Right ventricle myocardium inferior (tissue), 1 donor: ENCODE measurements at regions of chr11 and their contacts with region 1.

Region 1: GRCh38 chr11:10514210-10514609 is 26.8 kb downstream of the RNF141 start:
- DNase-seq: no peak
- ATAC-seq: no peak

Region 2: DNA sequence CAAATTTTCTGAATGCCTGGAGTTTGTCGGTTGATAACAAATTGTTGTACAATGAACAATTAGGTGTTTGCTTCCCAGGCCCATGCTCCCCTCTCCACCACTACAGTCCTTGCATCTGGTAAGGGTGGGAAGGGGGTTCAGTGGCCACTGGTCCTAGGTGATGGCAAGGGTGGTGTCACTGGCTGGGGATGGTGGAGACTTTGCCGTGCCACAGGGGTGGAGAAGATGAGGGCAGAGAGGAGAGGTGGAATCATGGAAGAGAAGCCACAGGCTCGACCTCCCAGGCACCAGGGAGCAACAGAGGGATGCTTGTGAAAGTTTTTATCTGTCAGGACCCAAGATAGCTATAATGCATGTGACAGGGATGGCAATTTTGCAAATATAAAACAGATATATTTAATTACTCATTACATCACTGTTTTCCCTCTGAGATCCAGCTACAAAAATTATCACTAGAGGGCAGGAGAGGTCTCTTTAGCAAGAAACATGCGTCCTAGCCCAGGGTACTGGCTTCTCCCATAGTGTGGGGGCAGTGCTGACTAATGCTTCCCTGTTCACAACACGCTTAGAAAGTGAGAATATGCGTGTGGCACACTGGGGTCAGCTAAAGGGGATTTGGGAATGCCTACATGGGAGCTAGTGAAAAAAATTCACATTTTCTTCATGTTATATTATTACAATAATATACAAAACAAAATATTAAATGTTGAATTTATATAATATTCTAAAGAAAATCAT is 108.2 kb before region 1 on chr11:
- intact Hi-C with region 1: loop called (anchors 10 kb)
- DNase-seq: no peak
- ATAC-seq: peak; percentile 88

Region 3: GRCh38 chr11:10441652-10442503 is 72.3 kb before region 1 on chr11:
- intact Hi-C with region 1: no loop called
- DNase-seq: no peak
- ATAC-seq: no peak

Region 4: GRCh38 chr11:10606536-10607208 is 92.5 kb after region 1 on chr11:
- intact Hi-C with region 1: no loop called
- DNase-seq: no peak
- ATAC-seq: peak; percentile 22

Region 5: GRCh38 chr11:10778217-10778970 is 264.2 kb after region 1 on chr11:
- intact Hi-C with region 1: no loop called
- DNase-seq: no peak
- ATAC-seq: peak; percentile 77

Region 6: DNA sequence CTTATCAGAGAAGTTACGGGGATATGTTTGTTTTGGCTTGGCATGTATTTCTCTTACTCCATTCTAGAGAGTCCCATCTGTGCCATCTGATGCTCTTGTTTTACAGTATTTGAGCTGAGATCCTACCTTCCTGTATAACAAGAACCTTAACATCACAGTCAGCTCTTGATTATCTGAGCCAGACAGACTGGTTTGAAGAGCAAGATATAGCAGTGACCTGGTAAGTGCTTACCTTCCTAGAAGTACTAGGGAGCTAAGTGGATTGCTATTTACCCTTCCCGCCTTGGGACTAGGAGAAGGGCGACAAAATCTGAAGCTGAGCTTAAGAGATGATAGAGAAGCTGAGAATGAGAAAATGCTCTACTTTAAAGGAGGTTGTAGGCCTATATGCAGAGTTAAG is 603.5 kb after region 1 on chr11:
- intact Hi-C with region 1: no loop called
- DNase-seq: no peak
- ATAC-seq: no peak